ENCODE measurements at regions of chr19 and their contacts with region 1.

Region 1: DNA sequence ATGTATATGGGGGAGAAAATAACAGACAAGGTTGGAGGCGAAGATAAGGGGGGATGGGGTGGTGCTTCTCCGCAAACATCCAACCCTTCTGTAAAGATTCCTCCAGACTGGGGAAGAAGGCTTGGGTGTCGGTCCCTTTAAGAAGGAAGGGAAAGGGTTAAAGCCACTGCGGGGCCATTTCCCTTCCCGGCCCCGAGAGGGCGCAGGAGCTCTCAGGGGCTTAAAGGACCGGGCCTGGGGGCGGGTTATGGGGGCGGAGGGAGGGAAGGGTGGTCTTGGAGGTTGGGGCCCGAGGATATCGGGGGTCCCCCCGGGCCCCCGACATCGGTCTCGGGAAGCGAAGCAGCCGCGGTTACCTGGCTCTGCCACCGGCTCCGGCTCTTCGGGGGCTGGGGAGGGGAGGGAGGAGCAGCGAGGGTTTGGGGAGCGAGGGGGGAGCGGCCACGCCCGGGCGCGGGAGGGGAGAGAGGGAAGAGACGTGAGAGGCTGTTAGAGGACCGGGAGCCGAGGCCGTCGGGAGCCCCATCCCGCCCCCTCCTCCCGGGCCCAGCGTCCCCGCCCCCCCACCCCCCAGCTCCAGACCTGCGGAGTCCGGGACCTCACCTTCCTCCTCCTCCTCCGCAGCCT is 2.8 kb downstream of the TNNT1 start:
- DNase-seq: no peak
- H3K4me3 ChIP-seq: no peak overlapping the region
- CTCF ChIP-seq: no peak
- POLR2A ChIP-seq: no peak

Region 2: DNA sequence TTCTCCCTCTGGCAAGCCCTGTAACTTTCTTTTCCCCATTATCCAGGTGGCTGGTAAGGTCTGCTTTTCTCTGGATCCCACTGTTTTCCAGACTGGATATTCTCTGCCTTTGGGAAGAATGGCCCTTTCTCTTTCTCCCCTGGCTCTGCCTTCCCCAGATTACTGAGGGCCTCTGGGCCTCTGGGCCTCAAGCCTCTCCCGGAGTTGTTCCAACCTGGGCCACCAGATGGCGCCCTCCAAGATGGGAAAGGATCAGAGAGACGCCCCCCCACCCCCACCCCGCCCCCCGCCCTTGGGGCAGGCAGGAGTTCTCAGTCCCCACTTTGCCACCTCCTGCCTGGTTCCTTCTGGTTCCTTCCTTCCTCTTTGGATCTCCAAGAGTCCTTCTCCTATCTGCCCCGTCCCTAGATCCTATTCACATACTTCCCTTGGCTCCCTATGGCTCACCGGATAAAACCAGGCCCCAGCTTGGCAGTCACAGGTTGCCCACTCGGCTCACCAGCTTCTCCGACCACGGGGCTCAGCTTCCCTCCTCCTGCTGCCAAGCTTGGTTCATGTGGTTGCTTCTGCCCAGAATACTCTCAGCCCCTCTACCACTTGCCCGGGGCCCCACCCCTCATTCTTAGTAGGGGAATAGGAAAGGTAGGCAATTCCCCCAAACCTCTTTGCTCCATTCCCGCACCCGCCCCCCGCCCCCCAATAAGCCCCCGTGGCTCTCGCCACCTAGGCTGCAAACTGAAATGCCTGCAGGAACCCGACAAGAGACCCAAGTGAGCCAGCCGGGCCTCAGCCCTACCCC is 57.4 kb before region 1 on chr19:
- intact Hi-C with region 1: no loop called
- DNase-seq: peak in 1 of 2 donors; percentile 95
- H3K4me3 ChIP-seq: no peak overlapping the region
- CTCF ChIP-seq: no peak
- POLR2A ChIP-seq: no peak

Region 3: DNA sequence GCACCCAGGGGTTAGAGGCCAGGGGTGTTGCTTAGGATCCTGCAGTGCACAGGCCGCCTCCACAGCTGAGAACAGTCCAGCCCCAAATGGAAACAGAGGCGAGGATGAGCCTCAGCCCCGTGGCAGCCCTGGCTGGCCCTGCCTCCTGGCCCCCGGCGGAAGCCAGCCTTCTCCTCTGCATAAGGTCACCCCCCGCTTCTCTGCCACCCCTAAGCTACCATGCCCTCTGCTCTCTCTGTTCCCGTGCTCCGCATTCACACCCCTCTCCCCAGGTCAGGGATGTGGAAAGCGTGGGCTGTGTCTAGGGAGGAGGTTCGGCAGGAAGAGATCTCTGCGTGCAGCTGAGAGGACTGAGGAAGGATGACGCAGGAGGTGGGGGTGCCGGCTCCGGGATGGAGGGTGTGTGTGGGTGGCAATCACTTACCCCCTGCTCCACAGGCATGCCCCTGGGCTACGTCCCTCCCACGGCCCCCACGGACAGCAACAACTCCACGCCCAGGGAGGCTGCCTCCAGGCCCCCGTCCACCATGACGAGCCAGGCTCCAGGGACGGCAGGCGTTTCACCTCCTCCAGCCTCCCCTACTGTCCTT is 348.1 kb after region 1 on chr19:
- intact Hi-C with region 1: loop called (anchors 10 kb)
- DNase-seq: no peak
- H3K4me3 ChIP-seq: no peak overlapping the region
- CTCF ChIP-seq: no peak
- POLR2A ChIP-seq: no peak